Natural killer cell (primary cell): ENCODE measurements at regions of chr1 and their contacts with region 1.

Region 1: GRCh38 chr1:226649780-226650179 is 89.3 kb downstream of the ITPKB start:
- DNase-seq: peak in 1 of 2 donors; percentile 73
- ATAC-seq: no peak
- H3K4me3 ChIP-seq: no peak overlapping the region
- H3K4me3 Mint-ChIP-seq: no peak overlapping the region
- H3K27ac ChIP-seq: no peak overlapping the region
- H3K27ac Mint-ChIP-seq: no peak overlapping the region
- H3K4me1 ChIP-seq: peaks cover 30% of the 10 kb centered on the region
- H3K4me1 Mint-ChIP-seq: peaks cover 24 to 31% of the 10 kb centered on the region in 2 donors
- H3K27me3 ChIP-seq: no peaks in the 10 kb centered on the region
- H3K27me3 Mint-ChIP-seq: no peaks in the 10 kb centered on the region
- CTCF ChIP-seq: peak; percentile 17

Region 2: GRCh38 chr1:226349801-226350518 is 299.8 kb before region 1 on chr1:
- intact Hi-C with region 1: no loop called
- DNase-seq: no peak
- ATAC-seq: no peak
- H3K4me3 ChIP-seq: no peak overlapping the region
- H3K4me3 Mint-ChIP-seq: no peak overlapping the region
- H3K27ac ChIP-seq: no peak overlapping the region
- H3K27ac Mint-ChIP-seq: no peak overlapping the region
- H3K4me1 ChIP-seq: peaks cover 3% of the 10 kb centered on the region
- H3K4me1 Mint-ChIP-seq: no peaks in the 10 kb centered on the region
- H3K27me3 ChIP-seq: no peaks in the 10 kb centered on the region
- H3K27me3 Mint-ChIP-seq: peaks cover 0 to 4% of the 10 kb centered on the region in 2 donors
- CTCF ChIP-seq: no peak

Region 3: GRCh38 chr1:226625832-226626576 is 23.8 kb before region 1 on chr1:
- intact Hi-C with region 1: no loop called
- DNase-seq: no peak
- ATAC-seq: peak; percentile 40 to 56 (median 54)
- H3K4me3 ChIP-seq: peak overlapping the region; percentile 28
- H3K4me3 Mint-ChIP-seq: peak overlapping the region; percentile 69
- H3K27ac ChIP-seq: no peak overlapping the region
- H3K27ac Mint-ChIP-seq: peak overlapping the region; percentile 38 to 51
- H3K4me1 ChIP-seq: peaks cover 9% of the 10 kb centered on the region
- H3K4me1 Mint-ChIP-seq: peaks cover 16 to 19% of the 10 kb centered on the region in 2 donors
- H3K27me3 ChIP-seq: no peaks in the 10 kb centered on the region
- H3K27me3 Mint-ChIP-seq: peaks cover 0 to 3% of the 10 kb centered on the region in 2 donors
- CTCF ChIP-seq: no peak

Region 4: DNA sequence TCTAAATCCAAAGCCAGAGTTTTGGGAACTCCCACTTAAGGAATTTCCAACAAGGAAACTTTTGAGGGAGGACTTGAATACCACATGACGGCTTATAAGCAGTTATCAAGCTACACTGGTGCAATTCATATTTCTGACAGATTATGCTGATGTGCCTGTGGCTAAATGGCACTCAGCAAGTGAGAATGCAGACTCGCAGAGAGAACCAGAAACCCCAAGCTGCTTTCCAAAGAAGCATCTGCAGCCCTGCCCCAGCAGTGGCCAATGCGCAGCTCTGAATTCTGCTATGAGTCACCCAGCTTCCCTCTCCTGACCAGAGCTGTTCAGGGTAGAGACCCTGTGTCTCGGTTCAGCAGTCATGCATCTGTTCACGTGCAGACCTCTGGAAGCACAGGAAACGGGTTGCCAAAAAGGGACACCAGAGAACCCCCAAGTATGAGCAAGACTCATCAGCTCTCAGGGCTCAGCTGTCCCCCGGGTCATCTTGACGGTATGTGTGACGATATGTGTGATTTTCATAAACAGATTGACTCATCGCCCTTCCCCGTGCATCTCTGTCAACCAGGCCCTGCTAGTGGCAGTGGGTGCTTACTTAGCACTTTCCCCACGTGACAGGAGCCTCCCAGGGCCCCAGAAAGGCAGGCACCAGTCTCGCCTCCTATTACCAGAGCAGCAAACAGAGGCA is 13.0 kb after region 1 on chr1:
- intact Hi-C with region 1: loop called (anchors 1 kb)
- DNase-seq: peak; percentile 80 to 96
- ATAC-seq: peak; percentile 81 to 94 (median 88)
- H3K4me3 ChIP-seq: no peak overlapping the region
- H3K4me3 Mint-ChIP-seq: peak overlapping the region; percentile 84
- H3K27ac ChIP-seq: peak overlapping the region; percentile 88
- H3K27ac Mint-ChIP-seq: peak overlapping the region in 1 of 2 donors; percentile 100
- H3K4me1 ChIP-seq: peaks cover 92% of the 10 kb centered on the region
- H3K4me1 Mint-ChIP-seq: peaks cover 81 to 88% of the 10 kb centered on the region in 2 donors
- H3K27me3 ChIP-seq: no peaks in the 10 kb centered on the region
- H3K27me3 Mint-ChIP-seq: no peaks in the 10 kb centered on the region
- CTCF ChIP-seq: no peak